ENCODE measurements at regions of chr12 and their contacts with region 1.

Region 1: GRCh38 chr12:124567661-124568373 is 405 bp upstream of the NCOR2 start:
- DNase-seq: peak; percentile 85
- ATAC-seq: peak; percentile 70
- H3K4me3 ChIP-seq: peak overlapping the region; percentile 72
- H3K27ac ChIP-seq: peak overlapping the region; percentile 2; the same call in 1 of the 2 replicates
- H3K4me1 ChIP-seq: 0 out of 2 replicates have a peak, but pooled peaks cover 8% of the 10 kb centered on the region
- H3K27me3 ChIP-seq: no peaks in the 10 kb centered on the region
- CTCF ChIP-seq: no peak

Region 2: DNA sequence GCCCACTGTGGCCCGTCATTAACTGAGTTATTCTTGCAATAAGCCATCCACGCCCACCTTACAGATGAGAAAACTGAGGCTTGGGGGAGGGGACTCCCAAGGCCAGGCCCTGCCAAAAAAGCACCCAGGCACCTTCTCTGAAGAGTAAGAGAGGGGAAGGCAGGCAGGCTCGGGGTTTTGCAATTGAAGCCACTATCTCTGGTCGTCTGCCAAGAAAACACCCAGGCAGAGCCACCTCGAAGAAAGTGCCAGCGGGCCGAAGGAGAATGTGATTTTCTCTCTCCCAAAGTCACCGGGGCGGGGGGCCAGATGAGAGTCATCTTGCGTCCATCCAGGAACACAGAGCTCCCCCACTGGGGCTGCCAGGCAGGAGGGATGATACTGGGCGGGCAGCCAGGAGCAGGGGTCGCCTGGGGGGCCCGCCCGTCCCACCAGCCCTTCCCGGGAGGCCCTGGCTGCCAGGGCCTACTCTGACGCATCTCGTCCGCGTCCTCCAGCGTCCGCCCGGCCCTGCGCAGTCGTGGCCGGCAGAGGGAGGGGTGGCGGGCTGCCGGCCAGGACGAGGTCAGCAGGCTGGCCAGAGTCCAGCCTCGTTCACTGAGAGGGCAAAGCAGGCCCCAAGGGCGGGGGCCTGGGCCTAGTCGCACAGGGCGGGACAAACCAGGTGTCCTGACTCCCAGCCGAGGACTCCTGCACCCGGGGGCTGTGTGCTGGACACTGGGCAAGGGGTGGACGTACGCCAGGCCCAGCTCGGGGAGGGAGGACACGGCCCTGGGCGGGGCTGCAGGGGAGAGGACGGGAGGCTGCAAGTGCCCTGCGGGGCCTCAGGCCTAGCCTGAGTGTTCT is 198.5 kb before region 1 on chr12:
- CTCF ChIA-PET with region 1: no interaction called
- POLR2A ChIA-PET with region 1: no interaction called
- intact Hi-C with region 1: loop called (anchors 5 kb)
- DNase-seq: peak; percentile 81
- ATAC-seq: peak; percentile 74
- H3K4me3 ChIP-seq: no peak overlapping the region
- H3K27ac ChIP-seq: peak overlapping the region; percentile 74
- H3K4me1 ChIP-seq: peaks cover 29% of the 10 kb centered on the region
- H3K27me3 ChIP-seq: no peaks in the 10 kb centered on the region
- CTCF ChIP-seq: 0 out of 2 replicates have a peak, but pooled peaks have one; percentile 2

Region 3: GRCh38 chr12:124479680-124480468 is 87.9 kb before region 1 on chr12:
- CTCF ChIA-PET with region 1: no interaction called
- POLR2A ChIA-PET with region 1: no interaction called
- intact Hi-C with region 1: no loop called
- DNase-seq: no peak
- ATAC-seq: peak; percentile 12
- H3K4me3 ChIP-seq: peak overlapping the region; percentile 44; the same call in 1 of the 2 replicates
- H3K27ac ChIP-seq: peak overlapping the region; percentile 50
- H3K4me1 ChIP-seq: peaks cover 18% of the 10 kb centered on the region
- H3K27me3 ChIP-seq: no peaks in the 10 kb centered on the region
- CTCF ChIP-seq: no peak

Region 4: GRCh38 chr12:124518051-124518932 is 49.5 kb before region 1 on chr12:
- CTCF ChIA-PET with region 1: no interaction called
- POLR2A ChIA-PET with region 1: no interaction called
- intact Hi-C with region 1: loop called (anchors 2 kb)
- DNase-seq: peak; percentile 99
- ATAC-seq: peak; percentile 70
- H3K4me3 ChIP-seq: peak overlapping the region; percentile 71
- H3K27ac ChIP-seq: peak overlapping the region; percentile 93
- H3K4me1 ChIP-seq: peaks cover 54% of the 10 kb centered on the region
- H3K27me3 ChIP-seq: no peaks in the 10 kb centered on the region
- CTCF ChIP-seq: no peak

Region 5: DNA sequence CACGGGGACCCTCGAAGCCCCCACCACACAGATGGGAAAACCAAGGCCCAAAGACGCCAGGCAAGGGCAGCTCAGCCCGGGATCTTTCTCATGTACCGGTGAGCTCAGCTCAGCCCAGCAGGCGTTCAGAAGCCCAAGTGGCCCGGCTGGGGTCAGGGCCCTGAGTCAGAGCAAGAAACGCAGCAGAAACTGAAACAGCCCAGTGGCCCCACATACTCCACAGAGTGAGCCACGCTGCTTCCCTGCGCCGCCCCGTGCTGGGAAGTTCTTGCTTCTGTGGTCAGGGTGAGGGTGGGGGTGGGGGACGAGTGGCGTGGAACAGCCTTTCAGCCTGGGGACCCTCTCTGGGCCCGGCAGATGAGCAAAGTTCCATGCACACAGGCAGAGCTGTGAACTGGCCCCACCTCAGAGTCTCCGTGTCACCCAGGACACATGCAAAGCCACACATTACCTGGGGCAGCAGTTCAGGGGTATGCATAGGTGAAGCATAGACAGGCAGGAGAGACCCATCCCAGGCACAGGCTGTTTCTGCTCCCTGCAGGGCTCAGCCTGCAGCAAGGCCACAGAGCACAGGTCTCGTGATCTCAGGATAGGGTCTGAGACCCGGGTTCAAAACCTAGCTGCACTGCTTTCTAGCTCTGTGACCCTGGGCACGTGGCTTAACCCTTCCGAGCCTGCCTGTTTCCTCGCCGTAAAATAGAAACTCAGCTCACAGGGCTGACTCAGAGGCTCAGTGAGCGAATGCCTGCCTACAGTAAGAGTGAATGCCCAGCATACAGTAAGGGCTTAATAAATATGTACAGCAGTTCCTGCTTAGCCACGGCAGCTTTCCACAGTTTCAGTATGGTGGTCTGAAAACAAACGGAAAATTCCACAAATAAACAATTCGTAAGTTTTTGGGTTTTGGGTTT is 22.1 kb before region 1 on chr12:
- CTCF ChIA-PET with region 1: no interaction called
- POLR2A ChIA-PET with region 1: no interaction called
- intact Hi-C with region 1: no loop called
- DNase-seq: no peak
- ATAC-seq: no peak
- H3K4me3 ChIP-seq: no peak overlapping the region
- H3K27ac ChIP-seq: no peak overlapping the region
- H3K4me1 ChIP-seq: peaks cover 17% of the 10 kb centered on the region
- H3K27me3 ChIP-seq: no peaks in the 10 kb centered on the region
- CTCF ChIP-seq: no peak

Region 6: GRCh38 chr12:124636138-124636978 is 68.5 kb after region 1 on chr12:
- CTCF ChIA-PET with region 1: no interaction called
- POLR2A ChIA-PET with region 1: no interaction called
- intact Hi-C with region 1: no loop called
- DNase-seq: peak; percentile 89
- ATAC-seq: peak; percentile 25
- H3K4me3 ChIP-seq: no peak overlapping the region
- H3K27ac ChIP-seq: peak overlapping the region; percentile 56
- H3K4me1 ChIP-seq: peaks cover 46% of the 10 kb centered on the region
- H3K27me3 ChIP-seq: no peaks in the 10 kb centered on the region
- CTCF ChIP-seq: no peak

Region 7: DNA sequence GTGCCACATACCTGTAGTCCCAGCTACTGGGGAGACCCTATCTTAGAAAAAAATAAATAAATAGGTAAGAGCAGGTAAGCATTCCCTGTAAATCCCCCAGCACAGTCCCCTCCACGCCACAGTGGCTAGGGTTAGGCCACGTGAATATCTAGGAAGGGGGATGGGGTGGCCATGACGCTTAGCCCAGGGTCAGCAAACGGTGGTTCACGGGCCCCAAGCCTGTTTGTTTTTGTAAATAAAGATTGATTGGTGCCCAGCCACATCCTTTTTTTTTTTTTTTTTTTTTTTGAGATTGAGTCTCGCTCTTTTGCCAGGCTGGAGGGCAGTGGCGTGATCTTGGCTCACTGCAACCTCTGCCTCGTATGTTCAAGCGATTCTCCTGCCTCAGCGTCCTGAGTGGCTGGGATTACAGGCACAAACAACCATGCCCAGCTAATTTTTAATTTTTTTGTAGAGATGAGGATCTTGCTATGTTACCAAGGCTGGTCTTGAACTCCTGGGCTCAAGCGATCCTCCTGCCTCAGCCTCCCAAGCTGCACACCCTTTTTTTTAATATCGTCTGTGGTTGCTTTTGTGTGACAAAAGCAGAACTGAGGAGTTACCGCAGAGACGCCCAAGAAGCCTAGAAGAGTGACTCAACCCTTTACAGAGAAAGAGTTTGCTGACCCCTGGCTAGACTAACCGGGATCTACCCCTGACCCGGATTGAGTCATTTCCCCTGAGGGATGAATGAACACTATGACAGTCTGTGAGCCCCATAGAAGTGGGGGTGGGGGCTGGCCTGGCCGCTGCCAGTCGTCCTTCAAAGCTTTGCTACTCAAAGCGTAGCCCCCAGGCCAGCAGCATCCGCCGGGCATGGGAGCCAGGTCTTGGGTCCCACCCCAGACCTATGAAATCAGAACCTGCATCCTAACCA is 113.3 kb after region 1 on chr12:
- CTCF ChIA-PET with region 1: no interaction called
- POLR2A ChIA-PET with region 1: no interaction called
- intact Hi-C with region 1: loop called (anchors 2 kb)
- DNase-seq: peak; percentile 99
- ATAC-seq: peak; percentile 66
- H3K4me3 ChIP-seq: peak overlapping the region; percentile 41
- H3K27ac ChIP-seq: peak overlapping the region; percentile 94
- H3K4me1 ChIP-seq: peaks cover 66% of the 10 kb centered on the region
- H3K27me3 ChIP-seq: no peaks in the 10 kb centered on the region
- CTCF ChIP-seq: 0 out of 2 replicates have a peak, but pooled peaks have one; percentile 31

Region 8: GRCh38 chr12:124745891-124746570 is 178.2 kb after region 1 on chr12:
- CTCF ChIA-PET with region 1: no interaction called
- POLR2A ChIA-PET with region 1: no interaction called
- intact Hi-C with region 1: loop called (anchors 5 kb)
- DNase-seq: peak; percentile 94
- ATAC-seq: peak; percentile 81
- H3K4me3 ChIP-seq: peak overlapping the region; percentile 35; the same call in 1 of the 2 replicates
- H3K27ac ChIP-seq: peak overlapping the region; percentile 79
- H3K4me1 ChIP-seq: peaks cover 36% of the 10 kb centered on the region
- H3K27me3 ChIP-seq: no peaks in the 10 kb centered on the region
- CTCF ChIP-seq: no peak

Measured in PC-3 (cell line).